Naive thymus-derived CD4-positive, alpha-beta T cell (primary cell): ENCODE measurements at regions of chr5 and their contacts with region 1.

Region 1: GRCh38 chr5:57499262-57500050 is 16.8 kb upstream of the ACTBL2 start:
- DNase-seq: peak in 5 of 9 donors; percentile 8 to 25 (median 21)
- ATAC-seq: peak; percentile 44
- H3K4me3 ChIP-seq: peak overlapping the region; percentile 28
- H3K4me3 Mint-ChIP-seq: peak overlapping the region; percentile 8 to 78 (median 66)
- H3K27ac ChIP-seq: no peak overlapping the region
- H3K27ac Mint-ChIP-seq: peak overlapping the region in 4 of 9 donors; percentile 39 to 74 (median 68)
- H3K4me1 ChIP-seq: peaks cover 0 to 16% of the 10 kb centered on the region in 2 donors
- H3K4me1 Mint-ChIP-seq: peaks cover 18 to 44% (median 32%) of the 10 kb centered on the region in 7 donors
- H3K27me3 ChIP-seq: no peaks in the 10 kb centered on the region
- H3K27me3 Mint-ChIP-seq: peaks cover 0 to 2% (median 0%) of the 10 kb centered on the region in 5 donors

Region 2: GRCh38 chr5:57411982-57412381 is 87.5 kb before region 1 on chr5:
- CTCF ChIA-PET with region 1: interaction called, 4 read pairs
- POLR2A ChIA-PET with region 1: no interaction called
- intact Hi-C with region 1: loop called in 1 of 2 experiments (anchors 5 kb)
- DNase-seq: no peak
- ATAC-seq: no peak
- H3K4me3 ChIP-seq: no peak overlapping the region
- H3K4me3 Mint-ChIP-seq: no peak overlapping the region
- H3K27ac ChIP-seq: no peak overlapping the region
- H3K27ac Mint-ChIP-seq: no peak overlapping the region
- H3K4me1 ChIP-seq: no peaks in the 10 kb centered on the region
- H3K4me1 Mint-ChIP-seq: no peaks in the 10 kb centered on the region
- H3K27me3 ChIP-seq: no peaks in the 10 kb centered on the region
- H3K27me3 Mint-ChIP-seq: peaks cover 0 to 6% (median 3%) of the 10 kb centered on the region in 5 donors

Region 3: GRCh38 chr5:57626703-57627102 is 127.2 kb after region 1 on chr5:
- CTCF ChIA-PET with region 1: no interaction called
- POLR2A ChIA-PET with region 1: no interaction called
- intact Hi-C with region 1: no loop called
- DNase-seq: no peak
- ATAC-seq: no peak
- H3K4me3 ChIP-seq: no peak overlapping the region
- H3K4me3 Mint-ChIP-seq: no peak overlapping the region
- H3K27ac ChIP-seq: no peak overlapping the region
- H3K27ac Mint-ChIP-seq: no peak overlapping the region
- H3K4me1 ChIP-seq: no peaks in the 10 kb centered on the region
- H3K4me1 Mint-ChIP-seq: no peaks in the 10 kb centered on the region
- H3K27me3 ChIP-seq: no peaks in the 10 kb centered on the region
- H3K27me3 Mint-ChIP-seq: peaks cover 5 to 12% (median 9%) of the 10 kb centered on the region in 5 donors

Region 4: GRCh38 chr5:57650360-57651069 is 151.1 kb after region 1 on chr5:
- CTCF ChIA-PET with region 1: interaction called, 4 read pairs
- POLR2A ChIA-PET with region 1: no interaction called
- intact Hi-C with region 1: loop called in 1 of 2 experiments (anchors 5 kb)
- DNase-seq: peak in 5 of 9 donors; percentile 8 to 27 (median 15)
- ATAC-seq: peak; percentile 55
- H3K4me3 ChIP-seq: no peak overlapping the region
- H3K4me3 Mint-ChIP-seq: no peak overlapping the region
- H3K27ac ChIP-seq: no peak overlapping the region
- H3K27ac Mint-ChIP-seq: no peak overlapping the region
- H3K4me1 ChIP-seq: no peaks in the 10 kb centered on the region
- H3K4me1 Mint-ChIP-seq: no peaks in the 10 kb centered on the region
- H3K27me3 ChIP-seq: no peaks in the 10 kb centered on the region
- H3K27me3 Mint-ChIP-seq: peaks cover 8 to 23% (median 16%) of the 10 kb centered on the region in 5 donors

Region 5: DNA sequence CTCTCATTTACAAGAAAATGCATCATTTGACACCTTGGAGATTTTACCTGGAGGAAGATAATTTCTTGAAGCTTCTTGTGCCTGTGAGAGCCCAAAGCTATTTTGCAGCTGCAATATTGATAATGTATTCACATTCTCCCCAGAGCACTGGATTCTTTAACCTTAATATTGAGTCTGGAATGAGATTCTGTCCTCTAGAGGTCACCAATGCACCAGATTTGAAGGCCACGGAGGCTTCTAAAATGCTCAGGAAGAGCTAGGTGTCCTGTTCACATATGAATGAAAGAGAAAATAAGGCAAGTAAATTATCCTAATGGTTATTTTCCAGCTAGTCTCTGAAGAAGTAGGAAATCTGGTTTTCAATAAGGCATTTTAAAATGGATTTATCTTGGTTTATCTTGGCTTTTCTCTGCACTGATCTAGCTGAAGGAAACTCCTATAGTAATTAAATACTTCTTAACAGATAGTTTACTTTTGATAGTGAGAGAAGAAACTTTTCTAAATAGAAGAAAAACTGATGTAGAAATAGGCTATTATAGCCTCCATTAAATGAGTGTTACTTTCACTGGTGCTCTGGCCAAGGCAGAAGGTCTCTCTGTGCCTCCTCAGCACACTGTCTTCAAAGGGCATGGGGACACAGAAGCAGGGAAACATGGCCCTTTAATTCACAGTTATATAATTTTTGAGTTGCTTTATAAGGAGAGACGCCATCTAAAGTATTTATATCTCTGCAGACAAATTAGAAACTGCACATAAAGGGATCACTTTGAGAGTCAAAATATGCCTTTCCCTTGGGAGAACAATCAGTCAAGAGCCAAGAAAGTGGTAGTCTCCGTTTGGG is 280.1 kb after region 1 on chr5:
- CTCF ChIA-PET with region 1: interaction called, 3 read pairs
- POLR2A ChIA-PET with region 1: no interaction called
- intact Hi-C with region 1: loop called in 1 of 2 experiments (anchors 5 kb)
- DNase-seq: peak in 5 of 9 donors; percentile 8 to 26 (median 18)
- ATAC-seq: peak; percentile 58
- H3K4me3 ChIP-seq: no peak overlapping the region
- H3K4me3 Mint-ChIP-seq: no peak overlapping the region
- H3K27ac ChIP-seq: no peak overlapping the region
- H3K27ac Mint-ChIP-seq: no peak overlapping the region
- H3K4me1 ChIP-seq: no peaks in the 10 kb centered on the region
- H3K4me1 Mint-ChIP-seq: no peaks in the 10 kb centered on the region
- H3K27me3 ChIP-seq: no peaks in the 10 kb centered on the region
- H3K27me3 Mint-ChIP-seq: peaks cover 0 to 4% (median 0%) of the 10 kb centered on the region in 5 donors